PC-9 (cell line): ENCODE measurements at regions of chr10 and their contacts with region 1.

Region 1: DNA sequence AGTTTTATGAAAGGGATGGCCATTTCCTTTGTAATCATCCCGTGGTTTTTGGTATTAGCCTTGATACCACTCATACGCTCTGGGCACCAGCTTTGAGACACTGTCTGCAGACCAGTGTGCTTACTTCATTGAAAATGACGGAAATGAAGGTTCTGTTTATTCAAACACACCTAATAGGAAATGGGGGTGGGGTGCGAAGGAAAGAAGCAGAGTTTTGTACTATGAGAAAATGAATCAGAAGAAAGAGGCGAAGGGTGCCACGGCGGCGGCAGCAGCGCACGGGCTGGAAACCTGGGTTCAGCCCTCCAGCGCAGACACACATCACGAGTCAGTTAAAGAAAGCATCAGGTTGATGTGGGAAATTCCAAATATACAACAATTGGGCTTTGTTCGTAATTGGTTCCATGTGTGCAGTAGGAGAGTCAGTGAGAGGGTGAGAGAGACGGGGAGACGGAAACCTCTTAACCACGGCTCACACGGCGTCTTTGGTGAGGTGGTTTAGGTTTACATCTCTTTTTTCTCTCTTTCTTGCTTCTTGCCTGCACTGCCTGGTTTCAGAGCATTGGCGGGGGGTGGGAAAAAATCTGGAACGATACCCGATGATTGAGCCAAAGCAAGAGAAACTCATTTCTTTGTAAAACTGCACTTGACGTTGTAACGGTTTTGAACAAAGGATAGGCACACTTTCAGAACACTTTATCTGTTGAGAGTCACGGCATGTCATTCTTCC is 321.2 kb downstream of the FRMD4A start:
- DNase-seq: no peak
- H3K4me3 ChIP-seq: peak overlapping the region; percentile 43; the same call in 1 of the 2 replicates
- H3K27ac ChIP-seq: no peak overlapping the region
- H3K4me1 ChIP-seq: peaks cover 6% of the 10 kb centered on the region
- H3K27me3 ChIP-seq: no peaks in the 10 kb centered on the region
- CTCF ChIP-seq: no peak

Region 2: DNA sequence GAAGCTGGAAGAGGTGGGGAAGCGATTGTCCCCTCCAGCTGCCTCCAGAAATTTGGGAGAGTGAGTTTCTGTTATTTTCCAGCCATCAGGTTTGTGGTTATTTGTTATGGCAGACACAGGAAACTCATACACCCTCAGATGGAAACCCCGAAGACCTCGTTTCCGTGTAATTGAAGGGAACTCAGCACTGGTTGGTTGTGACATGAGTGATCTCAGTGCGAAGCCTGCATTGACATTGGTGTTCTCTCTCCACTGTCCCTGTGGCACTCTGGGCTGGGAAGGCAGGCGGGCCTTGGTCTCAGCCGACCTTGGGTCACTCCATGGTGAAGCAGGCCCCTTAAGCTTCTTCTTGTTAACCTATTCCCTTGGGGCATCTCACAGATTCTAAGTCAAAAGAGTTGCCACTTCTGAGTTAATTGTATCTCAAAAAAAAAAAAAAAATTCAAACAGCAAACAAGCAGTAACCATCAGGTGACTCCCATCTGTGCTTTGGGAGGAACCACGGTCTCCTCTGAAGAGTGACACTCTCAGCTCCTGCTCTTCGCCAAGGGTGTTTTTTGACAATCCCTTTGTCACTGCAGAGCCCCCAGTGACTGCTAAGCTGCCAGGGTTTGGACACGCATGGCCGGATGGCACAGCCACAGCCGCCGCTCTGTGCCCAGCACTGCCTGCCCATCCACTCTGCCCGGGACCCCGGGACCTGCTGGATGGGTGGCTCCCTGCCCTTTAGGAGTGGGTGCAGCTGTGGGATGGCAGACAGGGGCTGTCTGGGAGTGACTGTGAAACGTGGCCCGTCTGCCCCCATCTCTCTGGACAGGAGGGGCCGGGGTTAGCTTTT is 189.2 kb before region 1 on chr10:
- CTCF ChIA-PET with region 1: no interaction called
- POLR2A ChIA-PET with region 1: no interaction called
- intact Hi-C with region 1: no loop called
- DNase-seq: no peak
- H3K4me3 ChIP-seq: no peak overlapping the region
- H3K27ac ChIP-seq: no peak overlapping the region
- H3K4me1 ChIP-seq: peaks cover 11% of the 10 kb centered on the region
- H3K27me3 ChIP-seq: no peaks in the 10 kb centered on the region
- CTCF ChIP-seq: no peak

Region 3: DNA sequence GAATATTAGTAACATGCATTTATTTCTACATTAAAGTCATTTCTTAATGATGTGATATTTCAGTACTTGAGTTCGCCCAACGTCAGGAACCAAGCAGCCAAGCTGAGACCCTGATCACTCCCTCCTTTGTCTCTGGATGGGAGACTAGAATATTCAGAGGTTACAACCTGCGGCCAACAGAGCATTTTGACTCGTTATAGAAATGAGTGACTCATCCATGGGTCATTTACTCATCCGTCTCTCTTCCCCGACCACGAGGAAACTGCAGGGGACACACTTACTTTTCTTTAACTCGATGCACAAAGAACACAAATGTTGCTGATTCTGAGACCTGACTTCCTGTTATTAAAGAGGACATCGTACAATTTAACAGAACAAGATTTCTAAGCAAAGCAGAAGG is 22.1 kb before region 1 on chr10:
- CTCF ChIA-PET with region 1: no interaction called
- POLR2A ChIA-PET with region 1: interaction called, 11 read pairs
- intact Hi-C with region 1: no loop called
- DNase-seq: peak; percentile 22 to 79
- H3K4me3 ChIP-seq: 0 out of 2 replicates have a peak overlapping the region, but pooled peaks have one; percentile 18
- H3K27ac ChIP-seq: peak overlapping the region; percentile 83
- H3K4me1 ChIP-seq: peaks cover 37% of the 10 kb centered on the region
- H3K27me3 ChIP-seq: no peaks in the 10 kb centered on the region
- CTCF ChIP-seq: no peak